Aorta (tissue), 5 donors: ENCODE measurements at regions of chr12 and their contacts with region 1.

Region 1: DNA sequence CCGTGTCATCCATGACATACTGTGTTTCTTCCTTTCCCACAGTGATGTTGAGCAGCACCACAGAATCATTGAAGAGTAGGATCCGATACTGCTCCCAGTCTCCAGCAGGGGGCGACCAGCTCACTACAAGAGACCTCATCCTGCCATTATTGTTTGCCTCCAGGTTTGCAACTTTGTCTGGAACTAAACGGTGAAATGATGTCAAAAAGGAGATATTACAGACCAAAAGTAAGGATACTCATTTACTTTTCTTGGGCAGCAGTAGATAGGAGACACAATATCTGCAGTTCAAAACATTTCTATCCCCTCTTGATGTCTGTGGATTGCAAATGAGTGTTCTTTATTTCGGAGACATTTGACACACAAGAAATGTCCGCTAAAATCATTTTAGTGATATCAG is 47.2 kb downstream of the PTPRB start:
- DNase-seq: peak; percentile 73 to 89
- ATAC-seq: peak; percentile 87
- H3K4me3 ChIP-seq: no peak overlapping the region
- H3K27ac ChIP-seq: no peak overlapping the region
- H3K4me1 ChIP-seq: no peaks in the 10 kb centered on the region
- H3K27me3 ChIP-seq: no peaks in the 10 kb centered on the region

Region 2: DNA sequence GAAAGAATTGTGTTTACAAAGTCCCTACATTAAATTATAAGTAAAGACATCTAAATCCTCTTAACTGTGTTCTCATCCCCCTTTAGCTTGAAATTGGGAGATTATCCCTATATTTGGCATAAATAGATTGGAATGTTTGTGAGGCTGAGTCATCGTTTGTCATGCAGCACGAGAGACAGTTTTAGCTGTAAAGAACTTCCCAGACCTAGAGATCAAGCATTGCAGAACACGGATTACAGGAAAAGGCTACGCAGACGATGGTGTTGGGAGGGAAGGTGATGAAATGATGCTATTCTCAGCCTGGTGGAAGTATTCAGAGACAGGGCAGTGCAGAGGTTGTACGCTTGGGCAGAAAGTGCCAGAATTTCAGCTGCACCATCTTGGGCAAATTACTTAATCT is 46.6 kb before region 1 on chr12:
- intact Hi-C with region 1: no loop called
- DNase-seq: no peak
- ATAC-seq: peak; percentile 33
- H3K4me3 ChIP-seq: no peak overlapping the region
- H3K27ac ChIP-seq: no peak overlapping the region
- H3K4me1 ChIP-seq: peaks cover 0 to 2% of the 10 kb centered on the region in 2 donors
- H3K27me3 ChIP-seq: no peaks in the 10 kb centered on the region

Region 3: GRCh38 chr12:70719672-70720420 is 129.8 kb after region 1 on chr12:
- intact Hi-C with region 1: loop called in 1 of 2 experiments (anchors 2 kb)
- DNase-seq: peak in 1 of 2 donors; percentile 60
- ATAC-seq: peak; percentile 79
- H3K4me3 ChIP-seq: no peak overlapping the region
- H3K27ac ChIP-seq: no peak overlapping the region
- H3K4me1 ChIP-seq: no peaks in the 10 kb centered on the region
- H3K27me3 ChIP-seq: peaks cover 0 to 1% of the 10 kb centered on the region in 2 donors

Region 4: DNA sequence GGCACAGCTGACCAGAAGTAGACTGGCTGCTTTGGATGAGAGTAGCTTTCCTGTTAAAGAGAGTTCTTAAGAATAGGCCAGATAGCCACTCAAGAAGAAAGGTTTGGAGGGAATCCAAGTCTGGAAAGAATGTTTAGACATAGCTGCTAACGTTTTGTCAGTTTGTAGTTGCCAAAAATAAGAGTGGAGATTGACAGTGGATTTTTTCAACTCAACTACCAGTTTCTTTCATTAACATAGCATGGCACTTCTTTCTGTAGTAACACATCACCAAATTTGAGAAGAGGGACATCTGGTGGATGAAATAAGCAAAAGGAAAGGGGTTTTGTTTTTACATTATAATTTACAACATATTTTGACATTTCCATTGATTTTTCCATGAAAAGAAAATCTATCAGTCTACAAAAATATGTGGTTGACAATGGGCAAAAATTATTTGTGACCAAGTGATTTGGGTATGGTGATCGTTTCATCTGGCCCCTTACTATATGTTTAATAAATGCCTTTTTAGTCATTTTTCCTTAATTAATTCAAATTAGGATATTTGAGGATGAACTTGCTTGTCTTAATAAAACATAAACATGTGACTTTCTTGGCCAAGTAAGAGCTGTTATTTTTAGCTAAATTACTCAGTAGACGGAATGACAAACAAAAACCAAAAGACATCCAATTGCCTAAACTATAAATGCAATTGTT is 259.4 kb after region 1 on chr12:
- intact Hi-C with region 1: loop called in 1 of 2 experiments (anchors 10 kb)
- DNase-seq: no peak
- ATAC-seq: no peak
- H3K4me3 ChIP-seq: no peak overlapping the region
- H3K27ac ChIP-seq: no peak overlapping the region
- H3K4me1 ChIP-seq: peaks cover 0 to 12% of the 10 kb centered on the region in 2 donors
- H3K27me3 ChIP-seq: no peaks in the 10 kb centered on the region